ENCODE measurements at regions of chr1 and their contacts with region 1.

Region 1: DNA sequence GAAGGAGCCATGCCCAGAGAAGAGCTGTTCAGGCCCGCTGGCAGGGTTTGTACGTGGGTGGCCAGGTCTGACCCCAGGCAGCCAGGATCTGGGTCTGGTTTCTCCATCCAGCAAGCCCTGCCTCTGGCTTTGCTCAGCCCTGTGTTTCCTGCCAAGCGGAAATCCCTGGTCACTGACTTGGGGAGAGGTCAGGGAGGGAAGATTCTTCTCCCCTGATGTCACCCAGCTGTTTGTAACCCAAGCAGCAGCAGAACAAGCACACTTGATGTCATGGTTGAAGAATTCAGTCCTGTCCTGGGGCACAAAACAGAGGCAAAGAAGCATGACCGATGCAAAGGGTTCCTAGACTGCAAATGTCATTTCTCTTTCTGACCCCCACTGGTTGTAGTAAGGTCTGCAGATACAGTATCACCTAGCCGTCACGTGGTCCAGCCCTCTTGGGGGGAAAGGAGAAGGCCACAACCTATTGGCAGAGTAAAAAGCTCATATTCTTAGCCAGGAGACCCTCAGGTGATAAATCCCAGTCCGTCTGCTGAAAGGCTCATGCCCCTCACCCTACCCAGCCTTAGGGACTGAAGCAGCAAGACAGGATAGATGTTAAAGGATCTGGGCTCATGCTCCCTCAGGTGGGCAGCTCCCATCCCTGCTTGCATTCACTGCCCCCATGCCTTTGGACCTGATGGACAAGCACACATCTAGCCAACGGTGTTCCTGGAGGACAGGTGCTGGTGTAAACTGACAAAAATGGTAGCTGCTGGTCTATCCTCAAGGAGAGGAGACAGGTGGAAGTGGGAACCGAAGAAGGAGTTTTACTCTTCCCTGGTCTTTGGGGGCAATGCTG is 120.8 kb downstream of the SYT2 start:
- DNase-seq: peak; percentile 88 to 96 (median 93)
- ATAC-seq: peak; percentile 91 to 92 (median 92)
- H3K4me3 ChIP-seq: no peak overlapping the region
- H3K27ac ChIP-seq: peak overlapping the region; percentile 61 to 95 (median 87)
- H3K4me1 ChIP-seq: peaks cover 17 to 97% (median 77%) of the 10 kb centered on the region in 12 donors
- H3K27me3 ChIP-seq: peaks cover 0 to 29% (median 0%) of the 10 kb centered on the region in 9 donors
- CTCF ChIP-seq: peak in 5 of 12 donors; percentile 11 to 17 (median 16)
- POLR2A ChIP-seq: peak in 1 of 2 donors; percentile 59

Region 2: GRCh38 chr1:202471246-202471645 is 118.2 kb before region 1 on chr1:
- intact Hi-C with region 1: no loop called
- DNase-seq: no peak
- ATAC-seq: no peak
- H3K4me3 ChIP-seq: peak overlapping the region in 3 of 12 donors; percentile 3 to 14 (median 7)
- H3K27ac ChIP-seq: peak overlapping the region in 3 of 12 donors; percentile 10 to 61 (median 22)
- H3K4me1 ChIP-seq: peaks cover 0 to 32% (median 5%) of the 10 kb centered on the region in 12 donors
- H3K27me3 ChIP-seq: peaks cover 0 to 49% (median 0%) of the 10 kb centered on the region in 9 donors
- CTCF ChIP-seq: no peak
- POLR2A ChIP-seq: no peak

Region 3: DNA sequence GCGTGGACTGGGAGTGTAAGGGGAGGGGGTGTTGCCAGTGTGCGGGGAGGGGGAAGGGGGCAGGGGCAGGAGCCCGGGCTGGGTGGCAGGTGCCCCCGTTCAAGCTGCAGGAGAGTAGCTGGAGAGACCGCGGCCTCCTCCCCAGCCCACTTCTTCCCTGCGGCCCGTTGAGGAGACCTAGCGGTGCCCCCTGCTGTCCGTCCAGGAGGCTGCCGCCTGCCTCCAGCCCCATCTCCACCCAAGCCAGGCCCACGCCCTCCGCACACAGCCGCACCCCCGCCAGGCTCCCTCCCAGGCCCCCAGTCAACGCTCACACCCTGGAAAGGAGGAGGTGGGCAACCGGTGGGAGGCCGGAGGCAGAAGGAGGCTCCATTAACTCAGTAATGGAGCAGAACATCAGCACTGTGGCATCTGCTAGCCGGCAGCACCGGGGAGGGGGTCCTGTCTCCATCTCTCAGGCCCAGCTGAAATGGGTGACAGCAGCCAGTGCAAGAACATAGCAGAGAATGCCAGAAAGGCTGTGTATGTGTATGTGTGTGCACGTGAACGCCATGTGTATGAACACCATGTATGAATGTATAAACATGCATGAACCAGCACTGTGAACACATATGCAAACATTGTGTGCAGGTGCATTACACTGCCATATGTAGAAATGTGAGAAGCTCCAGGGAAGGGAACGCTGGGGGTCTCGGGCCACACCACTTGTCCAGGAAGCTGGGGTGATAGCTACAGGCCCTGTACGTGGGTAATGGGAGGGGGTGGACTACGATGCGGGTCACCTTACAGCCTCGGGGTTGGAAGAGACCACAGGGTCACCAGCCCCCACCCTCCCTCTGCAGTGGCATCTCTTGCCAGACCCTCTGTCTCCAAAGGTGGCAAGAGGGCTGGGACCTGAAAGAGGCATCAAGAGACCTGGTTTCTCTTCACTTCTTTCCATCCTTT is 36.3 kb after region 1 on chr1:
- intact Hi-C with region 1: loop called in 1 of 10 experiments (anchors 5 kb)
- DNase-seq: peak; percentile 69 to 87 (median 77)
- ATAC-seq: peak; percentile 64 to 84 (median 81)
- H3K4me3 ChIP-seq: no peak overlapping the region
- H3K27ac ChIP-seq: no peak overlapping the region
- H3K4me1 ChIP-seq: peaks cover 0 to 30% (median 16%) of the 10 kb centered on the region in 12 donors
- H3K27me3 ChIP-seq: peaks cover 0 to 65% (median 0%) of the 10 kb centered on the region in 9 donors
- CTCF ChIP-seq: peak; percentile 55 to 80 (median 68)
- POLR2A ChIP-seq: no peak

Region 4: GRCh38 chr1:203026031-203026989 is 436.9 kb after region 1 on chr1 and contains the start of gene PPFIA4:
- intact Hi-C with region 1: no loop called
- DNase-seq: peak; percentile 86 to 94 (median 89)
- ATAC-seq: peak; percentile 29 to 89 (median 85)
- H3K4me3 ChIP-seq: peak within 1 kb of the TSS; percentile 49 to 83 (median 68)
- H3K27ac ChIP-seq: peak within 1 kb of the TSS in 11 of 12 donors; percentile 39 to 91 (median 67)
- H3K4me1 ChIP-seq: peaks cover 0 to 46% (median 19%) of the 10 kb centered on the region in 12 donors
- H3K27me3 ChIP-seq: peaks cover 0 to 8% (median 0%) of the 10 kb centered on the region in 9 donors
- CTCF ChIP-seq: peak in 2 of 12 donors; percentile 4 to 18
- POLR2A ChIP-seq: peak in 1 of 2 donors; percentile 16
- total RNA-seq, gene PPFIA4: 15.4 to 50.3 (median 36.9) TPM